OCI-LY7 (cell line): ENCODE measurements at regions of chr15 and their contacts with region 1.

Region 1: GRCh38 chr15:74950078-74951000 is 6.2 kb downstream of the RPP25 start:
- DNase-seq: peak; percentile 80
- H3K4me3 ChIP-seq: no peak overlapping the region
- H3K27ac ChIP-seq: no peak overlapping the region
- H3K4me1 ChIP-seq: peaks cover 22% of the 10 kb centered on the region
- CTCF ChIP-seq: peak; percentile 99

Region 2: DNA sequence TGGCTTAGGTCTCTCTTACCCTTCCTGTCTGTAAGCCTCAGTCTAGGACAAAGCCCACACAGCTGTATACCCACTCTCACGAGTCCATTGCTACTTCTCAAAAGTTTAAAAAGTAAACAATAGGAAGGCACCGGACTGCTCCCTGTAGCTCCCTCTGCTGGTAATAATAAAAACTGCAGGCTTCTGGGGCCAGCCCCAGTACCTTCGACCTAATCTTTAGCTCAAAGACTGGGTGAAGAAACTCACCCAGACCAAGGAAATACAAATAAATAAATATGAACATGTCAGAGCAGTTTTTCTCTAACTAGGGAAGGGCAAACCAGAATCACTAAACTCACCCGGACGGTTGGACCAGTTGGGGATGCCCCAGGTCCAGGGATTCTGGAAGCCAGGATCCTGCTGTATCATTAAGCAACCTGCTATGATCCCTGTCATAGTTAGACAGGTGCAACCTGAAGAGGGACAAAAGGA is 48.7 kb before region 1 on chr15:
- CTCF ChIA-PET with region 1: interaction called, 4 read pairs
- POLR2A ChIA-PET with region 1: no interaction called
- intact Hi-C with region 1: loop called (anchors 1 kb)
- DNase-seq: peak; percentile 72
- H3K4me3 ChIP-seq: no peak overlapping the region
- H3K27ac ChIP-seq: peak overlapping the region; percentile 19
- H3K4me1 ChIP-seq: peaks cover 39% of the 10 kb centered on the region
- CTCF ChIP-seq: peak; percentile 99